HEK293 (cell line): ENCODE measurements at regions of chr12 and their contacts with region 1.

Region 1: GRCh38 chr12:4604684-4605193 is 42.7 kb downstream of the DYRK4 start:
- H3K4me3 ChIP-seq: peak overlapping the region; percentile 88
- H3K27ac ChIP-seq: peak overlapping the region; percentile 54; the same call in 1 of the 2 replicates
- H3K4me1 ChIP-seq: no peaks in the 10 kb centered on the region
- CTCF ChIP-seq: peak; percentile 84

Region 2: DNA sequence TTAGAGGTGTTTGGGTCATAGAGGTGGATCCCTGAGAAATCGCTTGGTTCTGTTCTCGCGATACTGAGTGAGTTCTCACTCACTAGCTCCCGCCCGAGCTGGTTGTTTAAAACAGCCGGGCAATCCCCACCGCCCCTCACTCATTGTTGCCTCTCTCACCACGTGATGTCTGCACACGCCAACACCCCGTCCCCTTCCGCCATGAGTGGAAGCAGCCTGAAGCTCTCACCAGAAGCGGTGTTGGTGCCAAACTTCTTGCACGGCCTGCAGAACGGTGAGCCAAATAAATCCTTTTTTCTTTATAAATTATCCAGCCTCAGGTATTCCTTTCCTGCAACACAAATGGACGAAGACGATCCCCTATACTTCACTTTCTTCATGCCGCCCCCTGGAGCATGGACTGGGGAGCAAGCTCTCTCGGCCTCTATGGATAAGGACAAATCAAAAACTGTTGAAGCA is 376.6 kb before region 1 on chr12:
- CTCF ChIA-PET with region 1: no interaction called
- POLR2A ChIA-PET with region 1: no interaction called
- H3K4me3 ChIP-seq: no peak overlapping the region
- H3K27ac ChIP-seq: no peak overlapping the region
- H3K4me1 ChIP-seq: no peaks in the 10 kb centered on the region
- CTCF ChIP-seq: no peak

Region 3: DNA sequence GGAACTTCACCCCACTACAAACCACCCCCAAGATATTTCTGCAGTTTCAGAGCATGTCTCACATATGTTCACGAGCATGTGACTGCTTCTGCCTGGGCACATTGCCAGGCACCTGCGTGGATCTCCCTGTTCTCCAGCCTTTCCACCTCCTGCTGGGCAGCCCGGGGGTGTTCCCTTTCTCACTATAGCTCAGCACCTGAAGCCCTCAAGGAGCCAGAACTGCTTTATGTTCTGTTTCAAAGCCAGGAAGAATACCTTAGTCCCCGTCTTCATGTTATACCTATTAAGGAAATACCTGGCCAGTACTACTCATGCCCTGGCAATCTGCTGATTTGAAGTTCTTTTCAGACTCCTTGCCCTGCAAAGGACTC is 154.9 kb before region 1 on chr12:
- CTCF ChIA-PET with region 1: no interaction called
- POLR2A ChIA-PET with region 1: no interaction called
- H3K4me3 ChIP-seq: no peak overlapping the region
- H3K27ac ChIP-seq: no peak overlapping the region
- H3K4me1 ChIP-seq: peaks cover 5% of the 10 kb centered on the region; the same call in 1 of the 2 replicates
- CTCF ChIP-seq: no peak

Region 4: DNA sequence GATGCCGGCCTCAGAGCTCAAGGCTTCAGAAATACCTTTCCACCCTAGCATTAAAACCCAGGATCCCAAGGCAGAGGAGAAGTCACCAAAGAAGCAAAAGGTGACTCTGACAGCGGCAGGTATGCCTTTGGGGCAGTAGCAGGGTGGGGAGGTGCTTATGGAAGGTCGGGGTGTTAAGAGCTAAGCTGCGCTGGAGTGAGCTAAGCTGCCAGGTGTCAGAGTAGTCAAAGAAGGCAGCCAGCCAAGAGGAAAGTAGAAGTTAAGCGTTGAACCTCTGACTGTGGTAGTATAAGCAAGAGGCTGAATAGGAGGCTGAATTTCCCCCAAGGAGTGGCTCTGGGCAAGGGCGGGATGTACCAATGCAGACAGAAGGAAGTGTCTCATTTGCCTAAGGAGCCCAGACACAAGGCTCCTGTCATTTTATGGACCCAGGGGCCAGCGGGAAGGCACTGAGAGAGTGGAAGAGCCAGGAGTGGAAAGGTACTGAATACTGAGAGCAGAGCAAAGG is 13.5 kb before region 1 on chr12:
- CTCF ChIA-PET with region 1: interaction called, 18 read pairs
- POLR2A ChIA-PET with region 1: no interaction called
- H3K4me3 ChIP-seq: no peak overlapping the region
- H3K27ac ChIP-seq: no peak overlapping the region
- H3K4me1 ChIP-seq: no peaks in the 10 kb centered on the region
- CTCF ChIP-seq: no peak

Region 5: DNA sequence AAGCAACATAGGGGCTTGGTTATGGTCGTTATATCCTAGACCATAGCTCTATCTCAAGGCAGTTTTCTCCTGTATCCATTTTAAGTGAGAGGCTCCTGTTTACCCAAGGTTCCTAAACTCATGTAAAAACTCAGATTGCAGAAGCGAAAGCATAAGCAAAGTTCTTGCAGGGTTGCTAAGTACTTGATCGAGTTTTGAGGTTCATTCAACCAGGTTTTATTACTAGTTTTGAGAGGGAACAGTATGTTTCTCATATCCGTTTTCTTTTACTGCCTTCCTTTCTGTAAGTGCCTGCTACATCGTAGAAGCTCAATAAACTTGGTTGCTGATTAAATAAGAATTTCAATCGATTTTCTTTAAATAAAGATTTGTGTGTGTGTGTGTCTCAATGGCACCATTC is 39.0 kb after region 1 on chr12:
- CTCF ChIA-PET with region 1: interaction called, 10 read pairs
- POLR2A ChIA-PET with region 1: interaction called, 8 read pairs
- H3K4me3 ChIP-seq: no peak overlapping the region
- H3K27ac ChIP-seq: no peak overlapping the region
- H3K4me1 ChIP-seq: no peaks in the 10 kb centered on the region
- CTCF ChIP-seq: no peak

Region 6: DNA sequence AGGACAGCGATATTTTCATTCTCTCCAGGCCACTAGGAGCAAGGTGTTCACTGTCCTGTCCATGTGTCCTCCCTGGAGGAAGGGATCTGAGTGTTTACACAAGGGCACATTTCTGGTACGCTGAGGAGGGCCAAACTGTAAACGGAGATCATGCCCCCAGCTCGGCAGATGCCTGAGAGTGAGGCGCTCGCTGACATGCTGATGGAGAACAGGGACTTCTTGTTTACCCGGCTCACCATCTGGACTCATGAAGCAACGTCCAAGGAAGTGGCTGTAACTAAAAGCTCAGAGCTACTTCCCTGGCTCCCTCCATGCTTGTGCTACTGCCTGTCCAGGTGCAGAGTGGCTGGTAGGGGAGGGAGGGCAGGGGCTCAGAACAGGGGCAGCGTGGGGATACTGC is 261.6 kb after region 1 on chr12:
- CTCF ChIA-PET with region 1: no interaction called
- POLR2A ChIA-PET with region 1: no interaction called
- H3K4me3 ChIP-seq: no peak overlapping the region
- H3K27ac ChIP-seq: no peak overlapping the region
- H3K4me1 ChIP-seq: no peaks in the 10 kb centered on the region
- CTCF ChIP-seq: no peak